Transverse colon (tissue), 4 donors: ENCODE measurements at regions of chr4 and their contacts with region 1.

Region 1: GRCh38 chr4:13559413-13559812 is 15.1 kb upstream of the NKX3-2 start:
- DNase-seq: no peak
- H3K4me3 ChIP-seq: no peak overlapping the region
- H3K27ac ChIP-seq: no peak overlapping the region
- H3K4me1 ChIP-seq: no peaks in the 10 kb centered on the region
- H3K27me3 ChIP-seq: peaks cover 3% of the 10 kb centered on the region
- CTCF ChIP-seq: no peak
- EP300 ChIP-seq: no peak
- POLR2A ChIP-seq: no peak

Region 2: DNA sequence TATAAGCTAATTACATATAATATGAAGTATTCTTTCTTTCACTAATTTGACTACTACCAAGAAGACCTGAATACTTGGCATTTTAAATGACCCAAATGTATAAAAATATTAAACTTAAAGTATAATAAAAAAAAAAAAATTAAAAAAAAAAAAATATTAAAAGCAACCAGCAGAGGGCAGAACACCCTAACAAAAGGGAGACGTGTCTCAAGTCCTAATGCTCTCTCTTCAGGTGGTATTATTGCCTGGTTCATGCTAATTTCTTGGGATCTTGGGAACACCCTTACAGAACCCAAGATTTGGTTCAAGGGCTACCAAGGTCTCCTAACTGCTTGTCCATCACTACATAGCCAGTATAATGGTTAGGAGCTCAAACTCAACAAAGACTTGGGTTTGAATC is 830.0 kb before region 1 on chr4:
- in situ Hi-C with region 1: loop called in 3 of 4 experiments (anchors 10 to 25 kb)
- intact Hi-C with region 1: loop called (anchors 5 kb)
- DNase-seq: no peak
- H3K4me3 ChIP-seq: no peak overlapping the region
- H3K27ac ChIP-seq: no peak overlapping the region
- H3K4me1 ChIP-seq: no peaks in the 10 kb centered on the region
- H3K27me3 ChIP-seq: no peaks in the 10 kb centered on the region
- CTCF ChIP-seq: peak; percentile 32 to 53 (median 42)
- EP300 ChIP-seq: no peak
- POLR2A ChIP-seq: no peak

Region 3: DNA sequence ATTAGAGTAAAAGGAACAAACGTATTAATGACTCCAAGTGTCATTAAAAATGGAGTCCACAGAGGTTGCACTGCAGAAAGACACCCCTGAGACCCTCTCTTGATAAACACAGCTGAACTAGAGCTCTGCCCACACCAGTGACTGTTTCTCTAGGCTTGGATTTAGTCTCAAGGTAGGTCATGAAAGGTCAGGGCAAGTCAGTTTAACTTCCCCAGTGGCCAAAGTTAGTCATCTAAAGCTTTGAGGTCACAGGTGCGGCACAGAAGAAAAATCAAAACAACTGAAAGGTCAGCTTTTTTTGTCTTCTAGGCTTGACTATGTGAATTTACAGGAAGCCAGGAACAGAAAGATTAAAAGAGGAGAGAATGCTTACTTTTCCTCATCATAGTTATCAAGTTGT is 824.8 kb before region 1 on chr4:
- in situ Hi-C with region 1: loop called in 3 of 4 experiments (anchors 10 to 25 kb)
- intact Hi-C with region 1: loop called (anchors 5 kb)
- DNase-seq: no peak
- H3K4me3 ChIP-seq: no peak overlapping the region
- H3K27ac ChIP-seq: no peak overlapping the region
- H3K4me1 ChIP-seq: no peaks in the 10 kb centered on the region
- H3K27me3 ChIP-seq: no peaks in the 10 kb centered on the region
- CTCF ChIP-seq: no peak
- EP300 ChIP-seq: no peak
- POLR2A ChIP-seq: no peak